Left ventricle myocardium superior (tissue), 1 donor: ENCODE measurements at regions of chr19 and their contacts with region 1.

Region 1: GRCh38 chr19:7943444-7944176 is at the start of gene TIMM44:
- DNase-seq: peak; percentile 99
- ATAC-seq: peak; percentile 98
- total RNA-seq, gene TIMM44: 115 TPM

Region 2: GRCh38 chr19:8005534-8006256 is 62.1 kb after region 1 on chr19 and contains the start of gene ELAVL1:
- intact Hi-C with region 1: loop called (anchors 10 kb)
- DNase-seq: peak; percentile 97
- ATAC-seq: peak; percentile 90
- total RNA-seq, gene ELAVL1: 53.3 TPM